Kidney (tissue), 22 donors: ENCODE measurements at regions of chr5 and their contacts with region 1.

Region 1: DNA sequence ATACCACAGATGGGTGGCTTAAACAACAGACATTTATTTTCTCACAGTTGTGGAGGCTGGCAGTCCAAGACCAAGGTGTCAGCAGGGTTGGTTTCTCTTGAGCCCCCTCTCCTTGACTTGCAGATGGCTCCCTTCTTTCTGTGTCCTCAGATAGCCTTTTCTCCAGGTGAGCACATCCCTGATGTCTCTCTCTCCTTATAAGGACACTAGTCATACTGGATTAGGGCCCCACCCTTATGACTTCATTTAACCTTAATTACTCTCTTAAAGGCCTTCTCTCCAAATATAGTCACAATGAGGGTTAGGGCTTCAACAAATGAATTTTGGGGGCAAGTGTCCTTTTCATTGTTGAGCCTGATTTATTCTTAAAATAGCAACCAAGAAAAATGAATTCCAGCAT is 14.7 kb downstream of the PTGER4 start:
- DNase-seq: no peak
- H3K4me3 ChIP-seq: no peak overlapping the region
- H3K27ac ChIP-seq: no peak overlapping the region
- H3K4me1 ChIP-seq: no peaks in the 10 kb centered on the region
- H3K27me3 ChIP-seq: no peaks in the 10 kb centered on the region
- CTCF ChIP-seq: no peak

Region 2: DNA sequence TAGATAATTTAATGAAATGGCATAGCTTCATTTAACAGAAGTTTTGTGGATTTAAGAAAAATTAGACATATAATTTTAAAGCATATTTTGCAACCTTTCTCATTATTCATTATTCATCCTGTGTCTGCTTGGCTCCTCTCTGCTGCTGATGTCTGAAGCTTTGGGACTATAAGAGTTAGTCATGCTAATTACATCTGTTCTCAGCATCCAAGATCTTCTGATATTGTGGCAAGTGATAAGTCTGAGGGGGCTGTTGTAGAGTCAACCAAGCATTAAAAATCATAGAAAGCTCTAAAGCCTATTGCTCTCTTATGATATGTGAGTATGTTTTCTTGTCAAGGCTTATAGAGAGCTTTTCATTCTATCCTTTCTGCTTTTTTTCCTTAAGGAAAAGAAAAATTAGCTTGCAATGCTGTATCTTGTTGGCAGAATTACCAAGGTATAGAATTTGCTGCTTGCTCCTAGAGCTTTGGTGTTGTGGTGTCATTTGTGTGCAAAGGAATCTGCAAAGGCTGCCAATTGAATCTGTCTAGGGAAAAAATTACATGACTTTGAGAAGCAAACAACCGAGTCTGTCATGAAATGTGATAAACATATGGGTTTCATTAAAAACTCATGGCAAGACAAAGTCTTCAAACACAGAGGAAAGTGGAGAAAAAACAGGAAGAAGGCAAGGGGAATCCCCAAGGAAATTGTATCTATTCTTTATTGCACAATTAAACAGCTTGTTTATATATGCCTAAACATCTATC is 1113.6 kb before region 1 on chr5:
- intact Hi-C with region 1: loop called (anchors 10 kb)
- DNase-seq: peak in 1 of 5 donors; percentile 7
- H3K4me3 ChIP-seq: no peak overlapping the region
- H3K27ac ChIP-seq: no peak overlapping the region
- H3K4me1 ChIP-seq: no peaks in the 10 kb centered on the region
- H3K27me3 ChIP-seq: no peaks in the 10 kb centered on the region
- CTCF ChIP-seq: no peak

Region 3: DNA sequence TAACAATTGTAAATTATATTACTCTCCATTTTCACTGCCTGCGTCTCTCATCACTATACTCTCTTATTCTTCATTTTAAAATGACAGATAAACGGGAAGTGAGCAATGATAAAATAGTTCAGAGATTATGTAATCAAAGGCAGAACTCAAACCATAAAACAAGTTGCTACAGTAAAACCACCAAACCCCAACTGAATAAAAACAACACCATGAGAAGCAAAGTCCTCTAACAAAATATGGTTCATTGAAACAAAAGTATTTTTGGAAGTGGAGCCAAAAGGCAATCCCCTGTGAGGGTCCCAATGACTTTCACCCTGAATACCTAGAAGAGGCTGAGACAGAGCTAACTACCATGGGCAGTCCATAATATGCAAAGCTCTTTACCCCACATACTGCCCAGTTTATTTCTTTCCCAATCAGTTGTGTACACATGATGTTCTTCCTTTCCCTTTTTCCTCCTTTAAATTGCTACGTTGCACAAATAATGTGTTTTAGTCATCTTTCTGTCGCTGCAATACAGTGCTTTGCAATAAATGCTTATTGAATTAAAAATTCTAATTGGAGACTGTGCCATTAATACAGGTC is 78.8 kb before region 1 on chr5:
- intact Hi-C with region 1: no loop called
- DNase-seq: no peak
- H3K4me3 ChIP-seq: no peak overlapping the region
- H3K27ac ChIP-seq: no peak overlapping the region
- H3K4me1 ChIP-seq: no peaks in the 10 kb centered on the region
- H3K27me3 ChIP-seq: no peaks in the 10 kb centered on the region
- CTCF ChIP-seq: no peak

Region 4: DNA sequence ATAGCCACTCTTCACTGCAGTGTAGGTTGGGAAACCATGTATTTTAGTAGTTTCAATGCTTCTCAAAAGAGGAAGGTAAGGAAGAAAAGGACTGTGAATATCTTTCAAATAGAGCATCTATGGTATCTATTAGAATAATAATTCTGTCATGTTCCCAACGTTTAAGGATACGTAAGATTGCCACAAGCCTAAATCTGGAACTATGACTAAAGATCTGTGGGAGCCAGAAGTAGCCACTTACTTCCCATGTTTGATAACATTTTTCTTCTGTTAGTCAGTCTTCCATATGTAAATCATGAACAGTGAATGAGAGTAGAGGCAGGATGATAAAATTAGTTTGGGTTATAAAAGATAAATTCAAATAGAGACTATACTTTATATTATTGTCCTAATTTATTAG is 393.0 kb after region 1 on chr5:
- intact Hi-C with region 1: no loop called
- DNase-seq: no peak
- H3K4me3 ChIP-seq: no peak overlapping the region
- H3K27ac ChIP-seq: no peak overlapping the region
- H3K4me1 ChIP-seq: no peaks in the 10 kb centered on the region
- H3K27me3 ChIP-seq: no peaks in the 10 kb centered on the region
- CTCF ChIP-seq: no peak